H1 (cell line): ENCODE measurements at regions of chr1 and their contacts with region 1.

Region 1: DNA sequence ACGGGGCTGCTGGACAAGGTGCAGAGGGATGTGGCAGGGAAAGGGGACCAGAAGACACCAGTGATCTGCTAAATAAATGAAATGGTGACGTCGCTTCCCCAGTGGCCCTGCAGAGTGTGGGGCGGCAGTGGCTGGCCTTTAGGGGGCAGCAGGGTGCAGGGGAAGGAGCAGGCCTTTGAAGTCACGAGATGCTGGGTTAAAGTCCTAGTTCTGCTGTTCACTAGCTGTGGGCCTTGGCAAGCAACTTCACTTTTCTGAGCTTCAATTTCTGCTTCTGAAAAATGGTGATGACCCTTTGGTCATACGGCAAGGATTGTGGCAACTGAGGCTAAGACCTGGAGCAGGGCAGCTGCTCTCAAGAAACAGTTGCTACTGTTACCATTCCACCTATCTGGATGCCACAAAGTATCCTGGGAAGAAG is 9.2 kb upstream of the GALE start:
- DNase-seq: peak in 1 of 2 experiments; percentile 86
- H3K4me3 ChIP-seq: no peak overlapping the region
- H3K27ac ChIP-seq: no peak overlapping the region
- H3K4me1 ChIP-seq: peaks cover 0 to 1% (median 0%) of the 10 kb centered on the region in 4 experiments; a peak in 2 of 7 replicates
- H3K27me3 ChIP-seq: no peaks in the 10 kb centered on the region
- CTCF ChIP-seq: peak; percentile 90 to 97 (median 96)
- EP300 ChIP-seq: no peak
- POLR2A ChIP-seq: no peak
- RAD21 ChIP-seq: peak; percentile 82 to 85

Region 2: DNA sequence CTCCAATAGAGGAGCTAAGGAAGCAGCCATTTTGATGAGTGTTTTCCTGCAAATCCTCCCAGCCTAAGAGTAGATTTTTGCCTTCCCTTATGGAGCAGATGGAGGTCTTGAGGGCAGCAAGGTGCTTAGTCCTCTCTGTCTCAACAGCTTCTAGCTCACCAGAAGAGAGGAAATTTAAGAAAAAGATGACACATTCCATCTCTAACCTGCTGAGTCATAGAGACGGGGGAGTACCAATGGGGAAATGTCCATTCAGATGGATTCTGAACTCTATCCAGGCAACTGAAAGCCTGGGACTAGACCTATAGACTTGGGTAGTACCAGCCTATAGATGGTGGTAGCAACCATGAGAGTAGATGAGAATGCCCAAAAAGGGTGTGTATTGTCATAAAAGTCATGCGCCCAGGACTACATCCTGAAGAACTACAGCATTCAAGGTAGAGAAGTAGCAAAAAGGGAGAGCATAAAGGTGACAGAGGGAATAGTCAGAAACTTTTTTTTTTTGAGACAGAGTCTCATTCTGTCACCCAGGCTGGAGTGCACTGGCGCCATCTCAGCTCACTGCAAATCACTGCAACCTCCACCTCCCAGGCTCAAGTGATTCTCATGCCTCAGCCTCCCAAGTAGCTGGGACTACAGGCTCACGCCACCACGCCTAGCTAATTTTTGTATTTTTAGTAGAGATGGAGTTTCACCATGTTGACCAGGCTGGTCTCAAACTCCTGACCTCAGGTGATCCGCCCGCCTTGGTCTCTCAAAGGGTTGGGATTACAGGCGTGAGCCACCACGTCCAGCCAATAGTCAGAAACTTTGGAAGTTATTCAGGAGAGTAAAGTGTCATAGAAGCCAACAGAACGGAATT is 77.2 kb before region 1 on chr1:
- CTCF ChIA-PET with region 1: no interaction called
- POLR2A ChIA-PET with region 1: no interaction called
- DNase-seq: no peak
- H3K4me3 ChIP-seq: no peak overlapping the region
- H3K27ac ChIP-seq: no peak overlapping the region
- H3K4me1 ChIP-seq: no peaks in the 10 kb centered on the region
- H3K27me3 ChIP-seq: no peaks in the 10 kb centered on the region
- CTCF ChIP-seq: no peak
- EP300 ChIP-seq: no peak
- POLR2A ChIP-seq: no peak
- RAD21 ChIP-seq: no peak

Region 3: GRCh38 chr1:23825076-23825761 is 15.5 kb after region 1 on chr1 and contains the start of gene HMGCL:
- CTCF ChIA-PET with region 1: interaction called, 99 read pairs
- POLR2A ChIA-PET with region 1: interaction called, 8 read pairs
- DNase-seq: peak in 1 of 2 experiments; percentile 92
- H3K4me3 ChIP-seq: peak within 1 kb of the TSS; percentile 90 to 96 (median 94)
- H3K27ac ChIP-seq: peak within 1 kb of the TSS; percentile 96
- H3K4me1 ChIP-seq: peaks cover 0 to 6% (median 1%) of the 10 kb centered on the region in 4 experiments; a peak in 2 of 7 replicates
- H3K27me3 ChIP-seq: no peaks in the 10 kb centered on the region
- CTCF ChIP-seq: no peak
- EP300 ChIP-seq: no peak
- POLR2A ChIP-seq: peak; percentile 94 to 96
- RAD21 ChIP-seq: no peak
- total RNA-seq, gene HMGCL: 13.7 and 15.6 TPM in 2 replicates

Region 4: GRCh38 chr1:23854568-23854967 is 44.8 kb after region 1 on chr1:
- CTCF ChIA-PET with region 1: interaction called, 16 read pairs
- POLR2A ChIA-PET with region 1: no interaction called
- DNase-seq: no peak
- H3K4me3 ChIP-seq: no peak overlapping the region
- H3K27ac ChIP-seq: no peak overlapping the region
- H3K4me1 ChIP-seq: no peaks in the 10 kb centered on the region
- H3K27me3 ChIP-seq: no peaks in the 10 kb centered on the region
- CTCF ChIP-seq: peak in 2 of 3 experiments; percentile 5 to 19; a peak in 1 of 4 replicates
- EP300 ChIP-seq: no peak
- POLR2A ChIP-seq: no peak
- RAD21 ChIP-seq: peak; percentile 19 to 45; a peak in 2 of 4 replicates

Region 5: GRCh38 chr1:23908493-23909341 is 99.0 kb after region 1 on chr1:
- CTCF ChIA-PET with region 1: interaction called, 28 read pairs
- POLR2A ChIA-PET with region 1: no interaction called
- DNase-seq: no peak
- H3K4me3 ChIP-seq: no peak overlapping the region
- H3K27ac ChIP-seq: no peak overlapping the region
- H3K4me1 ChIP-seq: peaks cover 5 to 8% (median 5%) of the 10 kb centered on the region in 4 experiments
- H3K27me3 ChIP-seq: peaks cover 0 to 7% (median 5%) of the 10 kb centered on the region in 4 experiments; a peak in 5 of 7 replicates
- CTCF ChIP-seq: no peak
- EP300 ChIP-seq: no peak
- POLR2A ChIP-seq: no peak
- RAD21 ChIP-seq: no peak